Gastrocnemius medialis (tissue), 4 donors: ENCODE measurements at regions of chr13 and their contacts with region 1.

Region 1: DNA sequence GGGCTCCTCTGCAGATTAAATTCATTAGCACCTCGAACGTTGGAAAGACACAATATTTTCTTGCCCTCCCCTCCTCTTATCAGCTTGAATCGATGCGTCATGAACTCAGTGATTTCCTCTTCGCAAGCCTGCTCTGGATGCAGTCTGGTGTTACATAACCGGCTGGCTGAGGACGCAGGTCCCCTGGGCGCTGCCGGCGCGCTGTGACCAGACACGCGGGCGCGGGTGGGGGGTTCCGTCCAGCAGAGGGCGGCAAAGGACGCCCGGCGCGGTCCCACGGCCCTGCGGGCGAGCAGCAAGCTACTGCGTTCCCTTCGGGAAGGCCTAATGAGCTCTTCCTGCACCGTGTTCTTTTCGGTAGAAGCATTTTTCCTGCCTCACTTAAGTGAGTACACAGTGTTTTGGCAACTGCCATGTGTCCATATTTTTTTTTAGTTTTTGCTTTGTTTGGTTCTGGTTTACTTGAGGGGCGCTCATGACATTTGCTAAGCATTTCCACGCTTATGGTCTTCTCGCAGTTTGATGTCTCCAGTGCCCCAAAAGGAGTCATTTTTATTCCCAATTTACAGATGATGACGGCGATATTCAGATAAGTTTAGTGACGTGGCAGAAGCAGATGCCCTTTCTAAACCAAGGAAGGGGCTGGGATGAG is 112.2 kb upstream of the MBNL2 start:
- DNase-seq: peak; percentile 72 to 82
- ATAC-seq: peak; percentile 95 to 96
- H3K4me3 ChIP-seq: peak overlapping the region in 3 of 4 donors; percentile 21 to 42 (median 25)
- H3K27ac ChIP-seq: peak overlapping the region in 3 of 4 donors; percentile 50 to 63 (median 58)
- H3K4me1 ChIP-seq: peaks cover 3 to 18% of the 10 kb centered on the region in 2 donors
- H3K27me3 ChIP-seq: no peaks in the 10 kb centered on the region
- CTCF ChIP-seq: peak; percentile 94 to 100 (median 97)
- POLR2A ChIP-seq: no peak

Region 2: GRCh38 chr13:97174638-97175037 is 64.7 kb after region 1 on chr13:
- in situ Hi-C with region 1: no loop called
- intact Hi-C with region 1: no loop called
- DNase-seq: no peak
- ATAC-seq: no peak
- H3K4me3 ChIP-seq: no peak overlapping the region
- H3K27ac ChIP-seq: no peak overlapping the region
- H3K4me1 ChIP-seq: no peaks in the 10 kb centered on the region
- H3K27me3 ChIP-seq: no peaks in the 10 kb centered on the region
- CTCF ChIP-seq: no peak
- POLR2A ChIP-seq: no peak

Region 3: GRCh38 chr13:97212601-97213040 is 102.7 kb after region 1 on chr13:
- in situ Hi-C with region 1: loop called in 1 of 4 experiments (anchors 10 kb)
- intact Hi-C with region 1: loop called (anchors 1 kb)
- DNase-seq: no peak
- ATAC-seq: peak; percentile 60 to 69
- H3K4me3 ChIP-seq: no peak overlapping the region
- H3K27ac ChIP-seq: no peak overlapping the region
- H3K4me1 ChIP-seq: no peaks in the 10 kb centered on the region
- H3K27me3 ChIP-seq: no peaks in the 10 kb centered on the region
- CTCF ChIP-seq: peak; percentile 42 to 65 (median 53)
- POLR2A ChIP-seq: no peak

Region 4: DNA sequence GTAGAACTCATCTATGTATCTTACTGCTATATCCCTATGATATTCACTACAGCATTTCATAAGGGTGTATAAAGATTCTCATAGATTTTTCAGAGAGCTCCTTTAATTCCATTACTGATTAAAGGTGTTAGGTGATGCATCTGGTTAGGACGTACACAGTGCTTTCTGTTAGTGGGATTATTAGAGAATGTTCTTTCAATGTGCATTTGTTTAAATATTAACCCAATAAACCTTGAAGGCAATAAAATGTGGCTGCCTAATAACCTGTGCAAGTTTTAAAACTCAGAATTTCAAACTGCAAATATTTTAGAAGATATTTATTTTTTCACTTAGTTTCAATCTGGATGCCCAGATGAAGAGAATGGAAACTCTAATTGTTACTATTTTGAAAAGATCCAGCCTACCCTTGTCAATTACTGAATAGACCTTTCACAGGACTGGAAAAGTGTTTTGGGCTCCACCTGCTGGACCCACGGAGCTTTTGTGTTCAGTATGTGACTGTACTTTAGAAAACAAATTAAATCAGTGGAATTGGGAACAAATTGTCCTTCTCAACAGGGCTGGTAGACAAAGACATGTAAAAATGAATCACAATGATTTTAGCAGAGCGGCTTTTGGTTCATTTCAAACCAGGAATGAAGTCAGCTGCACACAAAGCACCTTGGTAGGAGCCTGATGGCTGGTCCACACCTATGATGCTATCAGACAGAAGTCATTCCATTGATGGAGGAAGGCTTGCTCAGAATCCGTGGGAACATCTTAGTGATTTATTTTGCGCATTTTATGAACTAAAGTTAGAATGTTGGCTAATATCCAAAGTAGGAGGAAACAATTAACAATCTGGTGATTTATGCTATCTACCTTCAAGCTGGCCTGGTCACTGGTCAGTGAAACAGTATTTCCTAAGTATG is 234.6 kb after region 1 on chr13:
- in situ Hi-C with region 1: loop called in 2 of 4 experiments (anchors 5 kb)
- intact Hi-C with region 1: loop called (anchors 1 kb)
- DNase-seq: peak in 1 of 2 donors; percentile 59
- ATAC-seq: peak; percentile 76 to 81
- H3K4me3 ChIP-seq: no peak overlapping the region
- H3K27ac ChIP-seq: peak overlapping the region; percentile 41 to 76 (median 70)
- H3K4me1 ChIP-seq: peaks cover 16 to 25% of the 10 kb centered on the region in 2 donors
- H3K27me3 ChIP-seq: no peaks in the 10 kb centered on the region
- CTCF ChIP-seq: peak; percentile 54 to 73 (median 64)
- POLR2A ChIP-seq: no peak

Region 5: GRCh38 chr13:97719736-97720135 is 609.8 kb after region 1 on chr13:
- in situ Hi-C with region 1: no loop called
- intact Hi-C with region 1: no loop called
- DNase-seq: no peak
- ATAC-seq: no peak
- H3K4me3 ChIP-seq: no peak overlapping the region
- H3K27ac ChIP-seq: no peak overlapping the region
- H3K4me1 ChIP-seq: no peaks in the 10 kb centered on the region
- H3K27me3 ChIP-seq: no peaks in the 10 kb centered on the region
- CTCF ChIP-seq: no peak
- POLR2A ChIP-seq: no peak